B cell (primary cell): ENCODE measurements at regions of chr4 and their contacts with region 1.

Region 1: DNA sequence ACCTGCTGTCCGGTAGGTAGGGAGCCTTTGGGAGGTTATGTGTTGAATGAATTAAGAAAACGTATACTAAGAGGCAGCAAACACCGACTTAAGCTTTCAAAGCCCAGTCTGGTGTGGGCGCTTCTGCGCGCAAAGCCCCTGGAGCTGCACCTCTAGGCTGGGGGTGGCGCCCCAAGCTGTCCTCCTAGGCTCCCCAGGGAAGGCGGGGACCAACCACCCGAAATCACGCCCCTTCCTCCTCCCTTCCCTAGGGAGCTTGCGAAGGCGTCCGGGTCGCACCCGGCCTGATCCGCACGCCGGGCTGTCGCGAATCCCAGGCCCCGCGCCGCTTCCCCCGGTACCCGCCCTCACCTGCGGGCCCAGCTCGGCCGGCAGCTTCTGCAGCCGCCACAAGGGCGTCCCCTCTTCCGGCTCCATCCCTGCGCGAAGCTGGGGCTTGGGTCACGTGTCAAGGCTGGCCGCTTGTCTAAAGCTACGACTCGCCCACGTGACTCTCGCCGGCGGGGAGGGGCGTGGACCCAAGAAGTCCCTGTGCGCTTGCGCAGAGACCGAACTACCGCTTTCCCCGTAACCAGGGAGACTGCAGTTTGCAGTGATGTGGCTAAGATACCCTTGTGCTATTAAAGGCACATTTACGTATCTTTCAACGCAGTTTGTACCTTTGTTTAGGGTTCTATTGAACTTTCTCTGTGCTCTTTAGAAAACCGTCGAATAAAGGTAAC is at the start of gene COMMD8:
- DNase-seq: peak; percentile 99
- ATAC-seq: peak; percentile 82
- H3K4me3 ChIP-seq: peak within 1 kb of the TSS; percentile 66 to 89 (median 82)
- H3K4me3 Mint-ChIP-seq: peak within 1 kb of the TSS; percentile 91
- H3K27ac ChIP-seq: peak within 1 kb of the TSS; percentile 73 to 96
- H3K27ac Mint-ChIP-seq: peak within 1 kb of the TSS; percentile 92
- H3K4me1 ChIP-seq: peaks cover 22 to 27% of the 10 kb centered on the region in 2 donors
- H3K4me1 Mint-ChIP-seq: peaks cover 53% of the 10 kb centered on the region
- H3K27me3 ChIP-seq: no peaks in the 10 kb centered on the region
- H3K27me3 Mint-ChIP-seq: no peaks in the 10 kb centered on the region
- CTCF ChIP-seq: peak; percentile 52
- total RNA-seq, gene COMMD8: 15.2 TPM in 2 replicates

Region 2: DNA sequence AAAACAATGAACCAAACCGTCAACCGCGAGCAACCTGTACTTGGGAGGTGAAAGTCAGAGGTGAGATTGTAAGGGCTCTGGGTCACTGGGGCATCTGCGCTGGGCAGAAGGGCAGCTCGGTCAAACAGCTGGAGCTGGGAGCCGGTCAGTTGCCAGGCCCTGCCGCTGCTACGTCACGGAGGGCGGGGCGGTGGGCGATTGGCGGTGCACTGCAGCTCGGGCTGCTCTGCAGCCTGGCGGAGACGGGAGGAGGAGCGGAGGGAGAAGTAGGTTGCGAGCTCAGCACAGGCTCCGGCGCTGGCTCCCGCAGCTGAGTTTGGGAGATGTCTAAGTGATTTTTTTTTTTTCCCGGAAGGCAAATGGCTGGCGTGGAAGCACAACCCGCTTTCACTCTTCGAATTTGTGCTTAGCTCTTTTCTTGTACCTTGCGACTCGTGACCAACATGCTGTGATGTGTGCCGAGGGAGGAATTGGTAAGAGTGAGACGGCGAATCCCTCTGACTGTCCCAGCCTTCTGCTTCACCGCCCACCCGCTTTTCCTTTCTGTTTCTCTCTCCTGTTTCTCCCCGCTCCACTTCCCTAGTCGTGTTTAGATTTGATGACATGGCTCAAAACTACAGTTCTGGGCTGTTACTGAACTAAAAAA is 21.8 kb after region 1 on chr4 and contains the start of gene ATP10D:
- CTCF ChIA-PET with region 1: interaction called, 44 read pairs
- POLR2A ChIA-PET with region 1: interaction called, 13 read pairs
- intact Hi-C with region 1: loop called (anchors 1 kb)
- DNase-seq: peak; percentile 89
- ATAC-seq: peak; percentile 95
- H3K4me3 ChIP-seq: peak within 1 kb of the TSS; percentile 79 to 97 (median 90)
- H3K4me3 Mint-ChIP-seq: peak within 1 kb of the TSS; percentile 97
- H3K27ac ChIP-seq: peak within 1 kb of the TSS; percentile 93
- H3K27ac Mint-ChIP-seq: peak within 1 kb of the TSS; percentile 96
- H3K4me1 ChIP-seq: peaks cover 32 to 52% of the 10 kb centered on the region in 2 donors
- H3K4me1 Mint-ChIP-seq: peaks cover 57% of the 10 kb centered on the region
- H3K27me3 ChIP-seq: no peaks in the 10 kb centered on the region
- H3K27me3 Mint-ChIP-seq: no peaks in the 10 kb centered on the region
- CTCF ChIP-seq: no peak
- total RNA-seq, gene ATP10D: 36.2 and 41.8 TPM in 2 replicates

Region 3: GRCh38 chr4:47499700-47500099 is 36.3 kb after region 1 on chr4:
- CTCF ChIA-PET with region 1: interaction called, 4 read pairs
- POLR2A ChIA-PET with region 1: interaction called, 4 read pairs
- intact Hi-C with region 1: loop called (anchors 1 kb)
- DNase-seq: peak; percentile 57
- ATAC-seq: peak; percentile 77
- H3K4me3 ChIP-seq: peak overlapping the region in 3 of 5 experiments; percentile 17 to 55 (median 38)
- H3K4me3 Mint-ChIP-seq: no peak overlapping the region
- H3K27ac ChIP-seq: peak overlapping the region; percentile 85 to 86
- H3K27ac Mint-ChIP-seq: no peak overlapping the region
- H3K4me1 ChIP-seq: peaks cover 44% of the 10 kb centered on the region in 2 donors
- H3K4me1 Mint-ChIP-seq: peaks cover 34% of the 10 kb centered on the region
- H3K27me3 ChIP-seq: no peaks in the 10 kb centered on the region
- H3K27me3 Mint-ChIP-seq: no peaks in the 10 kb centered on the region
- CTCF ChIP-seq: no peak

Region 4: GRCh38 chr4:47562297-47562696 is 98.9 kb after region 1 on chr4:
- CTCF ChIA-PET with region 1: interaction called, 40 read pairs
- POLR2A ChIA-PET with region 1: no interaction called
- intact Hi-C with region 1: loop called (anchors 1 kb)
- DNase-seq: no peak
- ATAC-seq: no peak
- H3K4me3 ChIP-seq: no peak overlapping the region
- H3K4me3 Mint-ChIP-seq: no peak overlapping the region
- H3K27ac ChIP-seq: no peak overlapping the region
- H3K27ac Mint-ChIP-seq: no peak overlapping the region
- H3K4me1 ChIP-seq: peaks cover 0 to 5% of the 10 kb centered on the region in 2 donors
- H3K4me1 Mint-ChIP-seq: peaks cover 11% of the 10 kb centered on the region
- H3K27me3 ChIP-seq: no peaks in the 10 kb centered on the region
- H3K27me3 Mint-ChIP-seq: no peaks in the 10 kb centered on the region
- CTCF ChIP-seq: no peak

Region 5: GRCh38 chr4:47914220-47914925 is 451.0 kb after region 1 on chr4 and contains the start of gene NFXL1:
- CTCF ChIA-PET with region 1: no interaction called
- POLR2A ChIA-PET with region 1: no interaction called
- intact Hi-C with region 1: loop called (anchors 1 kb)
- DNase-seq: peak; percentile 95
- ATAC-seq: peak; percentile 94
- H3K4me3 ChIP-seq: peak within 1 kb of the TSS; percentile 85 to 100 (median 99)
- H3K4me3 Mint-ChIP-seq: peak within 1 kb of the TSS; percentile 99
- H3K27ac ChIP-seq: peak within 1 kb of the TSS; percentile 48 to 75
- H3K27ac Mint-ChIP-seq: peak within 1 kb of the TSS; percentile 97
- H3K4me1 ChIP-seq: peaks cover 14 to 17% of the 10 kb centered on the region in 2 donors
- H3K4me1 Mint-ChIP-seq: peaks cover 27% of the 10 kb centered on the region
- H3K27me3 ChIP-seq: no peaks in the 10 kb centered on the region
- H3K27me3 Mint-ChIP-seq: no peaks in the 10 kb centered on the region
- CTCF ChIP-seq: no peak
- total RNA-seq, gene NFXL1: 16.5 and 16.6 TPM in 2 replicates

Region 6: GRCh38 chr4:48065587-48066052 is 602.2 kb after region 1 on chr4:
- CTCF ChIA-PET with region 1: no interaction called
- POLR2A ChIA-PET with region 1: no interaction called
- intact Hi-C with region 1: no loop called
- DNase-seq: no peak
- ATAC-seq: no peak
- H3K4me3 ChIP-seq: no peak overlapping the region
- H3K4me3 Mint-ChIP-seq: no peak overlapping the region
- H3K27ac ChIP-seq: no peak overlapping the region
- H3K27ac Mint-ChIP-seq: no peak overlapping the region
- H3K4me1 ChIP-seq: no peaks in the 10 kb centered on the region
- H3K4me1 Mint-ChIP-seq: no peaks in the 10 kb centered on the region
- H3K27me3 ChIP-seq: no peaks in the 10 kb centered on the region
- H3K27me3 Mint-ChIP-seq: peaks cover 7% of the 10 kb centered on the region
- CTCF ChIP-seq: no peak

Region 7: GRCh38 chr4:48830706-48831531 is 1367.5 kb after region 1 on chr4 and contains the start of gene OCIAD1:
- CTCF ChIA-PET with region 1: no interaction called
- POLR2A ChIA-PET with region 1: no interaction called
- intact Hi-C with region 1: loop called (anchors 2 kb)
- DNase-seq: peak; percentile 99
- ATAC-seq: peak; percentile 95
- H3K4me3 ChIP-seq: peak within 1 kb of the TSS; percentile 81 to 99 (median 93)
- H3K4me3 Mint-ChIP-seq: peak within 1 kb of the TSS; percentile 100
- H3K27ac ChIP-seq: peak within 1 kb of the TSS; percentile 96 to 98
- H3K27ac Mint-ChIP-seq: peak within 1 kb of the TSS; percentile 100
- H3K4me1 ChIP-seq: peaks cover 16% of the 10 kb centered on the region in 2 donors
- H3K4me1 Mint-ChIP-seq: peaks cover 21% of the 10 kb centered on the region
- H3K27me3 ChIP-seq: no peaks in the 10 kb centered on the region
- H3K27me3 Mint-ChIP-seq: no peaks in the 10 kb centered on the region
- CTCF ChIP-seq: no peak
- total RNA-seq, gene OCIAD1: 114 and 119 TPM in 2 replicates